ENCODE measurements at regions of chr16 and their contacts with region 1.

Region 1: GRCh38 chr16:12613131-12613991 is 190.3 kb downstream of the CPPED1 start:
- DNase-seq: no peak
- H3K4me3 ChIP-seq: no peak overlapping the region
- H3K27ac ChIP-seq: no peak overlapping the region
- H3K4me1 ChIP-seq: no peaks in the 10 kb centered on the region
- H3K27me3 ChIP-seq: no peaks in the 10 kb centered on the region
- CTCF ChIP-seq: no peak
- POLR2A ChIP-seq: no peak

Region 2: DNA sequence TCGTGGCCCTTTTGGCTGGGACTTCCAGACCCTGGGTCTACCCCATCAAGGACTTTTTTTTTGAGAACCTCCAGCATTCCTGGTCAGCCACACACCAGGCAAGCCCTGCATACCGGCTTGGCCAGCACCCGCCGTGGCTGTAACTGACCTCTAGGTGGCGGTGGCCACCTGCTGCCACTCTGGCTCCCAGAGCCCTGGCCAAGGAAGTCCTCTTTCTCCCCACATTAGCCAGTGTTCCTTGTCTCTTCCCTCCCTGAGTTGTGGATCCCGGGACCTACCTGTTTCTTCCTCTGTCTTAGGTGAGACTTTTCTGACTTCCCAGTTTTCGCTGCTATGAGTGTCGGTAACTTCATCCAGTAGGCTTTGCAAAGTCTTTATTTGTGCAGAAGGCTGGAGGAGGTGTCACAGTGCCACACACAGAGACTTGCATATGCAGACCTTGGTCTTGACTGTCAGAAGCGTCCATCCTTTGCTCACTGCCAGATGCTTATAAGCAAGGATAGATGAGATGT is 158.0 kb before region 1 on chr16:
- intact Hi-C with region 1: loop called (anchors 10 kb)
- DNase-seq: peak; percentile 42
- H3K4me3 ChIP-seq: no peak overlapping the region
- H3K27ac ChIP-seq: no peak overlapping the region
- H3K4me1 ChIP-seq: no peaks in the 10 kb centered on the region
- H3K27me3 ChIP-seq: no peaks in the 10 kb centered on the region
- CTCF ChIP-seq: peak; percentile 23 to 74 (median 66)
- POLR2A ChIP-seq: no peak

Region 3: DNA sequence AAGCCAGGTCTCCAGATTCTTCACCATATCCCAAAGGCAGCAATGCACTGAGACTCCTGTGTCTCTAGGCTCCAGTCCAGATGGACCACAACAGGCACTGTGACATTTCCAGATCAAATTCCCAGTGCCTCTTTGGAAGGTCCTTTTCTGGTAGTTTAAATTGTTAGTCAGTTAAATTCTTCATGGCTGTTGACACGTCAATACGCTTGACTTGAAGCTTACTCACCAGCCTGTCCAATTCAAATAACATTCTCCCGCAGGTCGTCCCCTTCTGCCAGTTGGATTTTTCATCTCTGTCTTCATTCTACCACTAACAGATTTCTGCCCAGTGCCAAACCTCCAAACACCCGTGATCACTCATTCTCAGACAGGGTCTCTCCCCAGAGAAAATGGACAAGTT is 374.7 kb after region 1 on chr16:
- intact Hi-C with region 1: no loop called
- DNase-seq: no peak
- H3K4me3 ChIP-seq: no peak overlapping the region
- H3K27ac ChIP-seq: no peak overlapping the region
- H3K4me1 ChIP-seq: no peaks in the 10 kb centered on the region
- H3K27me3 ChIP-seq: no peaks in the 10 kb centered on the region
- CTCF ChIP-seq: no peak
- POLR2A ChIP-seq: no peak